Panc1 (cell line): ENCODE measurements at regions of chr20 and their contacts with region 1.

Region 1: DNA sequence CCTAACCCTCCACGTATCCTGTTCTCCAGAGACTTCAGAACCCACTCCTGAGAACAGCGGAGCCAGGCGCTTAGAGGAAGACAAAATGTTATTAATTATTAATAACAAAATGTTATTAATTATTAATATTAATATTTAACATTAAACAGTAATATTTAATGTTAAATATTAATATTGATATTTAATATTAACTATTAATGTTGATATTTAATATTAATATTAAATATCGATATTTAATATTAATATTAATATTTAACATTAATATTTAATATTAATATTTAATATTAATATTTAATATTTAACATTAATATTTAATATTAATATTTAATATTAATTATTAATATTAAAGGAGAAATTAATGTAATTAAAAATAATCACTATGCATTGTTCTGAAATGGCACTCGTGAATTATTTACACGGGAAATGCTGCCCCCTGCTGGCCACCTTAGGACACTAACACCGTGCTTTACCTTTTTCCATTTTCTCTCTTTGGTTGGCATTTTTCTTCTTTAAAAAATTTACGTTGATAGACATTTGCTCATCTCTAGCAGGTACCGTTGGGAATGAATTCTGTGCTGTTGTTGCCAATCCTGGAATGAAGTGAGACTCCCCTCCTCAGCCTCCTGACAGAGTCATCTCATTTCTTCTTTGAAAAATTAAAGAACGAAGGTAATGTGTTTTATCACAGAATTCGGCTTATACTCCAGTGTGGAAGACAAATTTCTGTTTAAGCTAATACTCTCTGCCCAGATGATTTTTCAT is 7.5 kb upstream of the GGTLC1 start:
- DNase-seq: peak; percentile 10
- ATAC-seq: peak; percentile 62; the same call in 1 of the 2 replicates
- H3K4me3 ChIP-seq: no peak overlapping the region
- H3K27ac ChIP-seq: no peak overlapping the region
- H3K4me1 ChIP-seq: no peaks in the 10 kb centered on the region
- H3K27me3 ChIP-seq: peaks cover 4% of the 10 kb centered on the region; the same call in 1 of the 2 replicates
- CTCF ChIP-seq: peak; percentile 72

Region 2: DNA sequence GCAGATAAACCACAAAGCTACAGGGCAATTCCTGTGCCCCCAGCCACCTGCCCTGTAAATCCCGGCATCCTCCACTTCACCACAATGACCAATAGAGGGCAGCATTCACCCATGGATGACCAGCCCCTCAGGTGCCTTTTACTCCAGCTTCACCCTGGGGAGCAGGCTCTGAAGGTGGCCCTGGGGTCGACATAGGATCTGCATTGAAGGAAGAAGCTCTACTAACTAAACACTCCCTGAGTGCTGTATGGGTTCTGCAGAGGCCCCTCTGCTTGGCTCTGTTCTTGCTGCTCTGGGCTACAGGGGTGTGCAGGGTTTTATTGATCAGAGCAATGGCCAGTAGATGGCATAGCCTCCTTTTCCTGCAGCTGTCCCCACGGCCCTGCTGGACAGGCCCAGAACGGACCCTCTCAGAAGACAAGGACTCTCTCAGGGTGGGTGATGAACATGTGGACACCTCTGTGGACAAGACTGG is 327.6 kb before region 1 on chr20:
- CTCF ChIA-PET with region 1: no interaction called
- POLR2A ChIA-PET with region 1: no interaction called
- in situ Hi-C with region 1: no loop called
- intact Hi-C with region 1: loop called (anchors 5 kb)
- DNase-seq: peak; percentile 35
- ATAC-seq: peak; percentile 90
- H3K4me3 ChIP-seq: no peak overlapping the region
- H3K27ac ChIP-seq: no peak overlapping the region
- H3K4me1 ChIP-seq: no peaks in the 10 kb centered on the region
- H3K27me3 ChIP-seq: no peaks in the 10 kb centered on the region
- CTCF ChIP-seq: peak; percentile 89

Region 3: GRCh38 chr20:23889775-23890211 is 106.3 kb before region 1 on chr20:
- CTCF ChIA-PET with region 1: no interaction called
- POLR2A ChIA-PET with region 1: no interaction called
- in situ Hi-C with region 1: no loop called
- intact Hi-C with region 1: loop called (anchors 5 kb)
- DNase-seq: peak; percentile 56
- ATAC-seq: peak; percentile 98
- H3K4me3 ChIP-seq: no peak overlapping the region
- H3K27ac ChIP-seq: no peak overlapping the region
- H3K4me1 ChIP-seq: no peaks in the 10 kb centered on the region
- H3K27me3 ChIP-seq: no peaks in the 10 kb centered on the region
- CTCF ChIP-seq: peak; percentile 80

Region 4: GRCh38 chr20:23937303-23938117 is 58.6 kb before region 1 on chr20:
- CTCF ChIA-PET with region 1: no interaction called
- POLR2A ChIA-PET with region 1: no interaction called
- in situ Hi-C with region 1: no loop called
- intact Hi-C with region 1: loop called (anchors 1 kb)
- DNase-seq: peak; percentile 17
- ATAC-seq: peak; percentile 96
- H3K4me3 ChIP-seq: no peak overlapping the region
- H3K27ac ChIP-seq: no peak overlapping the region
- H3K4me1 ChIP-seq: no peaks in the 10 kb centered on the region
- H3K27me3 ChIP-seq: no peaks in the 10 kb centered on the region; the same call in 1 of the 2 replicates
- CTCF ChIP-seq: peak; percentile 69

Region 5: DNA sequence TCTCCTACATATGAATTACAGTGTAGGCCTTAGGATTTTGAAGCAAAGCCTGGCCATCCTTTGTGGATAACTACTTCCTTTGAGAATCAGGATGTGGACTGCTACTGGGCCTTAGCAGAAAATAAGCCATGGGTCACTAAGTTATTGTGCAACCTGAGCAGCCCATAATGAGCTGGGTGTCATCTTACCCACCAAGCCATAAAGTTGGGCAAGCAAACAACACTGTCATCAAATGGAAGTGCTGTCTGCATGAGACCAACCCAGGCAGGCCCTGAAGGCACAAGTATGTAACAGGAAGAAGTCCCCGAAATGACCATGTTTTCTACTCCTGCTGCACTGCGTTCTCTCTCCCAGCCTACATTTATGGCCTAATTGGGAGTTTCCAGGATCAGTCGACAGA is 198.1 kb after region 1 on chr20:
- CTCF ChIA-PET with region 1: no interaction called
- POLR2A ChIA-PET with region 1: no interaction called
- in situ Hi-C with region 1: no loop called
- intact Hi-C with region 1: no loop called
- DNase-seq: no peak
- ATAC-seq: no peak
- H3K4me3 ChIP-seq: no peak overlapping the region
- H3K27ac ChIP-seq: no peak overlapping the region
- H3K4me1 ChIP-seq: no peaks in the 10 kb centered on the region
- H3K27me3 ChIP-seq: no peaks in the 10 kb centered on the region
- CTCF ChIP-seq: no peak

Region 6: DNA sequence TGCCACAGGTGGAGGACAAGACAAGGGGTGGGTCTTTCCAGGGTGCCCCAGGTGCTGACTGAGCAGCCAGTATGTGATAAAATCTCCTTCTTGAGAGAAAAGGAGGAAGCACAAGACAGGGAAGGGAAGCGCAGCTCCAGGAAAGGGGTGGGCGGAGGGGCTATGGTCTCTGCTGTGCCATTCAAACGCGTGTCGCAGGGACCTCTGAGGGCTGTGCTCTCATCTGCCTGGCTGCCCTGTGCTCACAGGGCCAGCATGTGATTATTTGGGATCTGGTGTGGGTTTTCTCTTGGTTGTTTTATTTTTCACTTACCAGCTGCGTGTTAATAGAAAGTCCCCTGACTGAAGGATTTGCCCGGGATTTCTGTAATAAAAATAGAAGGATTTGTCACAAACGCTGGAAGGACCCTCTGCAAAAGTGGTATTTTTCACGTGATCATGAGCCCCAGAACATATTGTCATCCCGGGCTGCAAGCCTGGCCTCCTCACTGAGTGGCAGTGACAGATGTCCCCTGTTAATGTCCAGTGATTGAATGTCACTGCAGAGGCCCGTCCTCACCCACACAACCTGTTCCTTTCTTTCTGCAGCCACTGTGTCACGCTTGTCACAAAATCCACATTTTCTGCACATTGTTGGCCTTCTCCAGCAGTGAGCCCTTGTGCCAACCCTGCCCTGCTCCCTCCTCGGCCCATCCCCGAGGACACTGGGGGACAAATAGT is 1120.8 kb after region 1 on chr20:
- CTCF ChIA-PET with region 1: no interaction called
- POLR2A ChIA-PET with region 1: no interaction called
- in situ Hi-C with region 1: no loop called
- intact Hi-C with region 1: no loop called
- DNase-seq: no peak
- ATAC-seq: no peak
- H3K4me3 ChIP-seq: no peak overlapping the region
- H3K27ac ChIP-seq: peak overlapping the region; percentile 55; the same call in 1 of the 2 replicates
- H3K4me1 ChIP-seq: peaks cover 33% of the 10 kb centered on the region
- H3K27me3 ChIP-seq: no peaks in the 10 kb centered on the region
- CTCF ChIP-seq: no peak